Endothelial cell of umbilical vein (primary cell): ENCODE measurements at regions of chr20 and their contacts with region 1.

Region 1: DNA sequence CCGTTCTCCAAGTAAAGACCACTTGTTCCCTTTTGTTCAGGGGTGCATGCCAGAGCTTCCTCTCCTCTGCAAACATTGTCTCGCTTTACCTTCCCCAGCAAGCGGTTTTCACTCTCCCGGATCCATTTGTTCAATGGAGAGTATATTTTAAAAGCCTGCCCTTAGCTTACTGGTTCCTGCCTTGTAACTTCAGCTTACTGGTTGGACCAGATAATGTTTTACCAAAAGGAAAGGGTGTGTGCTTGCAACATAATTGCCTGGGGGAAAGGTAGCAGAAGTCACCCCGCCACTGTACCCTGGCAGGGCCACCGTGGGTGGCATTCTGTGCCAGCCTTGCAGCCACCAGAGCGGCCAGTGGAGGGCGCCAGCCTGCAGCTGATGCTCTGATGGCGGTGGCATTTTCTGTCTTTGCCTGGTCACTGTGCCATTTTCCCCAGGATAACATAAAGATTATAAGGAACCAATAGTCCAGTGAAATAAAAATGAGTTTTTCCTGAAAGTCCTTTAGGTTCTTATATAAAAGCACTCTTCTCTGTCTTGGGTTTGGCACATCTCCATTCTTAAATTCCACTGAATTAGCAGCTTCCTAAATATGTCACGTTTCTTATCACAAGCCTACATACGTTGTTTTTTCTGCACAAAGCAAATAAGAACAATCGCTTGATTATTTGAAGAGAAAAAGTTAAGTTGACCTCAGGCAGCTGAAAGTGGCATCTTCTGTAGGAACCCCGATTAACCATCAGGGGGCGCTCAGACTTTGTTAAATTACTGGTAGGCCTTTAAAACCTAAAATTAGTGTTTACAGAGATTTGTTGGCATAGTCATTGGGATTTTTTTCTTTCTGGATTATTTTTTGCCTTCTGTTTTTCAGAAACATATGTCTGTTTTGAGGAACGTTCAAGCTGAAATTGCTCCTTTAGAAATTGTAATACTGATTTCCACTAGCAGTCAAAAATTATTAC is 67.4 kb upstream of the XRN2 start:
- DNase-seq: peak; percentile 74
- H3K4me3 ChIP-seq: no peak overlapping the region
- H3K27ac ChIP-seq: no peak overlapping the region
- H3K4me1 ChIP-seq: no peaks in the 10 kb centered on the region
- H3K27me3 ChIP-seq: no peaks in the 10 kb centered on the region
- CTCF ChIP-seq: peak; percentile 67 to 94
- POLR2A ChIP-seq: no peak

Region 2: GRCh38 chr20:20860078-20860806 is 375.5 kb before region 1 on chr20:
- CTCF ChIA-PET with region 1: interaction called, 23 read pairs
- POLR2A ChIA-PET with region 1: no interaction called
- dilution Hi-C with region 1: no loop called
- intact Hi-C with region 1: loop called (anchors 5 kb)
- DNase-seq: peak; percentile 81
- H3K4me3 ChIP-seq: no peak overlapping the region
- H3K27ac ChIP-seq: no peak overlapping the region
- H3K4me1 ChIP-seq: no peaks in the 10 kb centered on the region
- H3K27me3 ChIP-seq: peaks cover 5 to 7% of the 10 kb centered on the region in 2 experiments
- CTCF ChIP-seq: peak; percentile 89 to 98
- POLR2A ChIP-seq: no peak

Region 3: DNA sequence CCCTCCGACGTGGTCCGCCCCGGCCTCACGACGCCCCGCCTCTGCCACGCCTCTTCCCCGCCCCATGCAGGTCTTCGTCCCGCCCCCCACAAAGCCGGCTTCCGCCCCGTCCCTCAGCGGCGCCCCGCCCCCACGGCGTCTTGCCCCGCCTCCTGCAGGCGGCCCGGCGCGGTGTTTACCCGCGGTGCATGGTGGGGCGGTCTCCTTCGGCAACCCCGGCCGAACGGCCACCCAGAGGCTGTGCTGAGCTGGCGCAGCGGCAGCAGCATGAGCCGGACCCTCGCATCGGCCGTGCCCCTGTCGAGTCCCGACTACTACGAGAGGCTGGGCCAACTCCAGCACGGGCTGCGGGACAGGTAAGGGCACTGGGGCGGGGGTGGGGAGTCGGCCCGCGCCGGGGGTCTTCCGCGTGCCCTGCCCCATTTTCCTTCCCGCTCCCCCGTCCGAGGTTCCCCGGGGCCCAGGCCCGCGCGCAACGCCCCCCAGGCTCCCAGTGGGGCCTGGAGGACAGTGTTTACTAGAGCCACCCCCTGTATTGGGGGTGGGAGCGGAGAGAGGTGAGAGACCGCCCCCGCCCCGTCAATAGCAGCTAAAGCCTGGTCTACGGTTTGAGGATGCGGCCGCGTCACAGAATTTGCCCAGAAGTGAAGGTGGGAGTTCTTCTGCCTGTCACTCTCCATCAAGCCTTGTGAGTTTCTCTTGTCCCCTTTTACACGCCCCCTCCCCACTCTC is 109.8 kb before region 1 on chr20 and contains the start of gene KIZ:
- CTCF ChIA-PET with region 1: interaction called, 3 read pairs
- POLR2A ChIA-PET with region 1: no interaction called
- dilution Hi-C with region 1: no loop called
- intact Hi-C with region 1: loop called (anchors 5 kb)
- DNase-seq: peak; percentile 97
- H3K4me3 ChIP-seq: peak within 1 kb of the TSS; percentile 57 to 97 (median 83)
- H3K27ac ChIP-seq: no peak within 1 kb of the TSS
- H3K4me1 ChIP-seq: peaks cover 13% of the 10 kb centered on the region
- H3K27me3 ChIP-seq: peaks cover 0 to 4% of the 10 kb centered on the region in 2 experiments
- CTCF ChIP-seq: peak in 1 of 2 donors; percentile 45
- POLR2A ChIP-seq: peak; percentile 62
- total RNA-seq, gene KIZ: 7.3 and 9.6 TPM in 2 replicates

Region 4: DNA sequence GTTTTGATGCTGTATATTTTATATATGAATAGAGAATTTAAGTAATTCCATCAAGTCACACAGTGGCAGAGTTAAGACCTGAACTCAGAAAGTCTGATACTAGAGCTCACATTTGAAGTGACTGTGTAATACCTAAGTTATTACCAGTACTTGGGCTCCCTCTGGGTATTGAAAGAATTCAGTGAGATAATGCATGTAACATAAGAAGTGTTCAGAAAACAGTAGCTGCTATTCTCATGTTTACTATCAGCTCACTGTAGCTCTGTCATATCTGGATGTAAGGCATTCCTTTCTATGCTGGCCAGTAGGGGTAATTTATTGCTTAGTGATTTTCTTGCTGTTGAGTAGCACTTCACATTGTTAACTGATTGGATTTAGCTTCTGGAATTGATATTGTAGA is 116.9 kb after region 1 on chr20:
- CTCF ChIA-PET with region 1: interaction called, 19 read pairs
- POLR2A ChIA-PET with region 1: no interaction called
- dilution Hi-C with region 1: no loop called
- intact Hi-C with region 1: no loop called
- DNase-seq: peak; percentile 18
- H3K4me3 ChIP-seq: no peak overlapping the region
- H3K27ac ChIP-seq: no peak overlapping the region
- H3K4me1 ChIP-seq: peaks cover 5% of the 10 kb centered on the region
- H3K27me3 ChIP-seq: no peaks in the 10 kb centered on the region
- CTCF ChIP-seq: no peak
- POLR2A ChIP-seq: no peak

Region 5: DNA sequence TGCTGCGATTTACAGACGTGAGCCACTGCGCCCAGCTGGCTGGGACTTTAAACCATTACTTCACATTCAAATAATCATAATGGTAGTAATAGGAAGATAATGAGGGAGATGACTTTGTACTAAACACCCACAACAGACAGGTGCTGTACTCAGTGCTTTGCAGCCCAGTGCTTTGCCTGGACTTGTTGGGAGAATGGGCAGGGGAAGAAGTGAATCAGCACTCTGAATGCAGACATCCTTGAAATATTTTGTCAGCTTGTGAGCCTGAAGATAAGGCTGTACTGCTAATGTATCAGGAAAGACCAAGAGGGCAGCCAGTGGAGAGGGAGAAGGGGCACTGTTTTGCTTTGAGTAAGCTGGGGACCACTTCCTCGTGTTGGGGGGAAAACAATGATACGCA is 260.7 kb after region 1 on chr20:
- CTCF ChIA-PET with region 1: interaction called, 443 read pairs
- POLR2A ChIA-PET with region 1: no interaction called
- dilution Hi-C with region 1: no loop called
- intact Hi-C with region 1: no loop called
- DNase-seq: peak; percentile 20
- H3K4me3 ChIP-seq: no peak overlapping the region
- H3K27ac ChIP-seq: no peak overlapping the region
- H3K4me1 ChIP-seq: no peaks in the 10 kb centered on the region
- H3K27me3 ChIP-seq: peaks cover 6% of the 10 kb centered on the region in 2 experiments
- CTCF ChIP-seq: no peak
- POLR2A ChIP-seq: no peak